Aorta (tissue), 5 donors: ENCODE measurements at regions of chr1 and their contacts with region 1.

Region 1: GRCh38 chr1:35930593-35931445 is at the start of gene AGO3:
- DNase-seq: peak; percentile 91 to 95
- ATAC-seq: peak; percentile 96
- H3K4me3 ChIP-seq: peak within 1 kb of the TSS; percentile 80 to 81
- H3K27ac ChIP-seq: peak within 1 kb of the TSS; percentile 94 to 97
- H3K4me1 ChIP-seq: no peaks in the 10 kb centered on the region
- H3K27me3 ChIP-seq: no peaks in the 10 kb centered on the region
- total RNA-seq, gene AGO3: 48.1 to 50.4 TPM

Region 2: DNA sequence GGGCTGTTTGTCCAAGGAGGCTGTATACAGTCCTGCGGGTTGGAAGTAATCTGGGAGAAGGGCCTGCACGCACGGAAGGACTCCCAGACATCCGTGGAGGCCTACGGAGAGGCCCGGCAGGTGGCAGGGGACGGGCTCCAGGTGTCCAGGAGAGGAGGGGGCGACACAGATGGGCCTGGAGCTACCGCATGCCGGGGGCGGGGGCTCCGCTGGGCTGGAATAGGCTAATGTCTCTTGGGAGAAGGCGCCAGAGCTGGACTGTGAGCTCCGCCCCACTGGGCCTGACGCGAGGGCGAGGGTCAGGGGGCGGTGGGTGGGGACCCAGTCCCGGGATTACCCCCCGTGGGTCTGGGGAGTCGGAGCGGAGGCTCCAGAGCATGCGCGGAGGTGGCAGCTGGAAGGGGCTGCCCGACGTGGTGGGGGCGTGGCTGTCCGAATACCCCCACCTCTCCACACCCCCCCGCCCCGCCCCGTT is 47.1 kb before region 1 on chr1:
- intact Hi-C with region 1: loop called in 1 of 2 experiments (anchors 5 kb)
- DNase-seq: peak; percentile 70 to 85
- ATAC-seq: peak; percentile 49
- H3K4me3 ChIP-seq: peak overlapping the region; percentile 66 to 85
- H3K27ac ChIP-seq: peak overlapping the region in 1 of 2 donors; percentile 55
- H3K4me1 ChIP-seq: no peaks in the 10 kb centered on the region
- H3K27me3 ChIP-seq: no peaks in the 10 kb centered on the region

Region 3: GRCh38 chr1:35971601-35972000 is 40.8 kb after region 1 on chr1:
- intact Hi-C with region 1: no loop called
- DNase-seq: no peak
- ATAC-seq: no peak
- H3K4me3 ChIP-seq: no peak overlapping the region
- H3K27ac ChIP-seq: no peak overlapping the region
- H3K4me1 ChIP-seq: no peaks in the 10 kb centered on the region
- H3K27me3 ChIP-seq: no peaks in the 10 kb centered on the region

Region 4: DNA sequence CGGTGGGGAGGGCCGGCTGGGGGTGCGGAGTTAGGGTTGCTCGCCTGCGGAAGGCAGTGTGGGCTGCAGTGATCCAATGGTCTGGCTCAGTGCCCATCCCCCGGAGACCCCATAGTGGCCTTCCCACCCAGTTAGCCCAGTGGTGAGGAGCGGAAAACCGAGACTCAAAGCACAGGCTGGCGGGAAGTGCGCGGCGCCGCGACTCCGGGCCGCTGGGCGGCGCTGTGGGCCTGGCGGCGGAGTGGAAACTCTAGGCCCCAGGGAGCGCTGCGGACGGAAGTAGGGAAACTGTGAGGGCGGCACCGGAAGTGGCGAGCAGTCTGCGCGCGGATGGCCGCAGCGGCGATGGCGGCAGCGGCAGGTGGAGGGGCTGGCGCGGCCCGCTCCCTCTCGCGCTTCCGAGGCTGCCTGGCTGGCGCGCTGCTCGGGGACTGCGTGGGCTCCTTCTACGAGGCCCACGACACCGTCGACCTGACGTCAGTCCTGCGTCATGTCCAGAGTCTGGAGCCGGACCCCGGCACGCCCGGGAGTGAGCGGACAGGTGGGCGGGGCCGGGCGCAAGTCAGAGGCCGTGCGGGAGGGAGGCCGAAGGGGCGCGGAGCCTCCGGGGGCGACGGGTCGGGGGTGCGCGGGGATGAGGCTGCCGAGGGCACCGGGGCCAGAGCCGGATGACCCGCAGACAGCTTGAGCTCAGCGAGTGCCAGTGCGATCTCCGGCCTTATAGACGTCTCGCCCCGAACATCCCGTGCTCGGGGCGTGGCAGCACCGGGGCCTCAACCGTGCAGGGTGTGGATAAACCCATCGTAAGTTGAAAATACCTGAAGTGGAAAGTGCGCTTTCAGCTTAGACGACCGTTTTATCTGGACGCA is 158.0 kb after region 1 on chr1 and contains the start of gene ADPRS:
- intact Hi-C with region 1: loop called in 1 of 2 experiments (anchors 5 kb)
- DNase-seq: peak; percentile 94 to 97
- ATAC-seq: peak; percentile 94
- H3K4me3 ChIP-seq: peak within 1 kb of the TSS; percentile 59 to 64
- H3K27ac ChIP-seq: peak within 1 kb of the TSS in 1 of 2 donors; percentile 33
- H3K4me1 ChIP-seq: no peaks in the 10 kb centered on the region
- H3K27me3 ChIP-seq: no peaks in the 10 kb centered on the region
- total RNA-seq, gene ADPRS: 15.9 to 21.2 TPM